Left ventricle myocardium inferior (tissue), 1 donor: ENCODE measurements at regions of chr3 and their contacts with region 1.

Region 1: DNA sequence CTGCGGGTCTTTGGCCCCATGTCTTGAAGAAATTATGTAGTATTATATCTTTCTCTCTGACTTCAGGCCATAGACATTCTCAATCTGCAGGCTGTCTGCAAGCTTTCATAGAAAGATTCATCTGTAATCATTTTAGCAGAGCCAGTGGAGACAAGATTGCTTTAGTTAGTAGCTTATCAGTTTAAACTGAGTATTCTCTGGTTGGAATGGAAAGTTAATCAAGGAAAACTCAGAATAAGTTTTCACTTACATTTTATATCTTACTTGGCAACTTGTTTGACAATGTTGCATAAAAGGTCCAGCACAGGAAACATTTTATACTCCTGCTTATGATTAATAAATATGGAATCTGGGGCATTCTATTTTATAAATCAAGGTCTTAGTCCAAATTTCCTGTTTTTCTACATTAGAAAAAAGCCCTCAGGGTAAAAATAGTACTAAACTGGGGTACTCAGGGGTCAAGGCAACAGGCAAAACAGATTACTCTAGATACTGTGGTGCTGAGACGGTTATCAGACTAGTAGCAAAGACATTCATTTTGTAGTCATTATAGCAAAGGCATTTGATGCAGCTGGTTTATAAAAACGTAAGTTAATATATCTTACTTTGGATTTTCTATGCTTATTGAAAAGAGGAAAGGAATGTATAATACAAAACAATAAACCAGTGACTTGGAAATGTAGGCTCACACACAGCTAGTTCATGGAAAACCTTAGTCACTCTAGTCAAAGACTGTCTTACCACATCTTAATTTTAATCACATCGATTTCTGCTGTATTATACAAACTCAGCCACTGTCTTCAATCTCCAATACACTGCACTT is 45.2 kb upstream of the FILIP1L start:
- DNase-seq: no peak
- H3K4me3 ChIP-seq: no peak overlapping the region
- H3K27ac ChIP-seq: peak overlapping the region; percentile 77
- H3K4me1 ChIP-seq: peaks cover 60% of the 10 kb centered on the region
- H3K27me3 ChIP-seq: no peaks in the 10 kb centered on the region
- CTCF ChIP-seq: no peak

Region 2: DNA sequence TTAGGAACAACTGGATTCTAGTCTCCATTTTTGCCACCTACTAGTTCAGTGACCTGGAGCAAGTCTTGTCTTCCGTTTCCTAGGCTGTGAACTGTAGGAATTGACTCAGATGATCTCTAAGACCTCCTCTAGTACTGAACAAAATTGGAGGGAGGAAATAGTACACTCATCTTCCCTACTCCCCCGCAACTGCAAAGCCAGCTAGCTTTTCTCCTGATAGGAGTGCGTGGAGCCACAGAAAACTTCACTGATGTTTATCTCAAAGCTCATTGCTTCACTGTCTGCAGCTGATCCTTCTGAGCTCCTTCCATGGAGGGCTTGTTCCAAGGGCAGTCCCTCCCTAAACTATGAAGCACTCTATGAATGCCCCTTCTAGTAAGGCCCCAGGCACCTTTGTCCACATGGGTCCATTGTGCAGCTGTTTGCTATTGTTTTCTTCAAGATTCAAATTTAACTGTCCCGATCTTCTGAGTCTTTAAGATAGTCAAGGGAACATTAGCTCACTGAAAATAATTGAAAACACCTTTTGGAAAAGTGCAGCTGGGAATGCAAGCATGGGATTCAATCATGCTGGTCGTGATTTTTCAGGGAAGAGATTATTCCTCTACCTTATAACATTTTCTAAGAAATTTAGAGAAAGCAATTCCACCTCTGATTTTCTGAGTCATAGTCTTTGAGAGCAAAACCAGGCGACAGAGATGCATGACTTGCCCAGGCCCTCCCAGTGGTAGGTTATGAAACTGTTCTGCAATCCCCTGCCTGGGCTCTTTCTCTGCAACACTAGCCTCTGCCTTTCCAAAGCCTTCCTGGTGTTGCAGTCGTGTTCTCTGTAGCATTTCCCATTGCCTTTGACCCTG is 69.5 kb before region 1 on chr3:
- intact Hi-C with region 1: loop called (anchors 10 kb)
- DNase-seq: no peak
- H3K4me3 ChIP-seq: no peak overlapping the region
- H3K27ac ChIP-seq: peak overlapping the region; percentile 35
- H3K4me1 ChIP-seq: peaks cover 51% of the 10 kb centered on the region
- H3K27me3 ChIP-seq: no peaks in the 10 kb centered on the region
- CTCF ChIP-seq: peak; percentile 37